GM10248 (cell line): ENCODE measurements at regions of chr1 and their contacts with region 1.

Region 1: GRCh38 chr1:45673956-45674355 is 12.4 kb downstream of the GPBP1L1 start:
- DNase-seq: no peak
- CTCF ChIP-seq: no peak

Region 2: GRCh38 chr1:45512641-45513054 is 161.3 kb before region 1 on chr1:
- CTCF ChIA-PET with region 1: no interaction called
- POLR2A ChIA-PET with region 1: no interaction called
- DNase-seq: peak; percentile 64
- CTCF ChIP-seq: peak; percentile 71

Region 3: DNA sequence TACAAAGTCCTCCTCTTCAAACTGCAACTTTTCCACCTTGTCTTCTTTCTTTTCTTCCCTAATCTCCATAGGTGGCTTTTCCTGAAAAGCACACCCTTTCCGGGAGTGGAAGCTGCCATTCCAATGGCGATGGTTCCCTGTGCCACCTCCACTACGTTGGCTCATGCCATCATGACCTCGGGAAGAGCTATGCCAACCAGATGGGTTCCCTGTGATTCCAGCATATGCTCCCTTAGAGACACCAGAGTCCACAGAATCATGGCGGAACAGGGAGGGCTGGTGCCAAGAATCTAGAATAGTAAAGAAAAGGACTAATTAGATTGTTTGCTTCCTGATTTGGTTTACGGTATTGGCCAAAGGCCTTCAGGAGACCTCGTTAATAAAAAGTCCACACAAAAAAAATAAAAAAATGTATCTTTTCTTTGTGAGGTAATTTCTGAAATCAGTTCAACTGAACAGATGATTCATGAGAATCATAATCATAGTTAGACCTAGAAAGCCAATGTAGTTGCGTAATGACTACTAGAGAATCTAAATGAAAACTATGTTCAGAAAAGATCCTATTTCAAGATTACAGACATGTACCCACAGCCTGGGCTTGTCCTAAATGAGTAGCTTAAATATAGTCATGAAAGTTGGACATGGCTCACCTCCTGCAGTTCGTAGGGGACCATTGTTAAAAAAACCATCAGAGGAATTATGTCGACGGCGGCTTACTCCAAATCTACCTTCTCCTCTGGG is 19.2 kb before region 1 on chr1:
- CTCF ChIA-PET with region 1: interaction called, 15 read pairs
- POLR2A ChIA-PET with region 1: interaction called, 3 read pairs
- DNase-seq: no peak
- CTCF ChIP-seq: no peak